Activated CD4-positive, alpha-beta T cell treated with anti-CD3 and anti-CD28 coated beads, Interleukin-2, amount 10 ng/mL, durations not matched to agents 24 days and 14 days (primary cell): ENCODE measurements at regions of chr10 and their contacts with region 1.

Region 1: GRCh38 chr10:52779541-52780390 is 7.2 kb upstream of the MBL2 start:
- DNase-seq: peak; percentile 84
- H3K4me3 Mint-ChIP-seq: no peak overlapping the region
- H3K27ac Mint-ChIP-seq: no peak overlapping the region
- H3K4me1 Mint-ChIP-seq: no peaks in the 10 kb centered on the region
- H3K27me3 Mint-ChIP-seq: no peaks in the 10 kb centered on the region

Region 2: GRCh38 chr10:52308251-52309031 is 471.3 kb before region 1 on chr10:
- intact Hi-C with region 1: loop called (anchors 10 kb)
- DNase-seq: peak; percentile 59
- H3K4me3 Mint-ChIP-seq: no peak overlapping the region
- H3K27ac Mint-ChIP-seq: no peak overlapping the region
- H3K4me1 Mint-ChIP-seq: peaks cover 4% of the 10 kb centered on the region
- H3K27me3 Mint-ChIP-seq: peaks cover 45% of the 10 kb centered on the region

Region 3: GRCh38 chr10:52644373-52645186 is 135.2 kb before region 1 on chr10:
- intact Hi-C with region 1: loop called (anchors 1 kb)
- DNase-seq: peak; percentile 70
- H3K4me3 Mint-ChIP-seq: no peak overlapping the region
- H3K27ac Mint-ChIP-seq: no peak overlapping the region
- H3K4me1 Mint-ChIP-seq: no peaks in the 10 kb centered on the region
- H3K27me3 Mint-ChIP-seq: no peaks in the 10 kb centered on the region

Region 4: GRCh38 chr10:52740913-52741675 is 38.7 kb before region 1 on chr10:
- intact Hi-C with region 1: loop called (anchors 1 kb)
- DNase-seq: peak; percentile 80
- H3K4me3 Mint-ChIP-seq: no peak overlapping the region
- H3K27ac Mint-ChIP-seq: no peak overlapping the region
- H3K4me1 Mint-ChIP-seq: no peaks in the 10 kb centered on the region
- H3K27me3 Mint-ChIP-seq: no peaks in the 10 kb centered on the region

Region 5: DNA sequence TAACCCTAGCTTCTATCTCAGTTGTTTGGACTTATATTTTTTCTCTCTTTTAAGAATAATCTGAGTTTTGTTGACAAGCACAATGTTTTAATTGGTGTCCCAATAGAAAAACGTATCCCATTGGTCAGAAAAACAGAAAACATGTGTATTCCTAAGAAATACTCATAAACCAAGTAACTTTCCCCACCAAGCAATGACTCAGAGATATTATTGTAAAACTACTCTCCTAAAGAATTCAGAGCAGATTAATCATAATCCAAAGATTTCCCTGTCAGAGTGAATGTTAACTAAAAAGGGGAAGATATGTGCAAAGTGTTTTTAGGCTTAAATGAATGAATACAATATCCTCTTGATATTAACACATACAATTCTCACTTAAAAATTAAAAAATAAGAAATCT is 22.2 kb after region 1 on chr10:
- intact Hi-C with region 1: no loop called
- DNase-seq: no peak
- H3K4me3 Mint-ChIP-seq: no peak overlapping the region
- H3K27ac Mint-ChIP-seq: no peak overlapping the region
- H3K4me1 Mint-ChIP-seq: no peaks in the 10 kb centered on the region
- H3K27me3 Mint-ChIP-seq: no peaks in the 10 kb centered on the region